Breast epithelium (tissue), 4 donors: ENCODE measurements at regions of chr11 and their contacts with region 1.

Region 1: DNA sequence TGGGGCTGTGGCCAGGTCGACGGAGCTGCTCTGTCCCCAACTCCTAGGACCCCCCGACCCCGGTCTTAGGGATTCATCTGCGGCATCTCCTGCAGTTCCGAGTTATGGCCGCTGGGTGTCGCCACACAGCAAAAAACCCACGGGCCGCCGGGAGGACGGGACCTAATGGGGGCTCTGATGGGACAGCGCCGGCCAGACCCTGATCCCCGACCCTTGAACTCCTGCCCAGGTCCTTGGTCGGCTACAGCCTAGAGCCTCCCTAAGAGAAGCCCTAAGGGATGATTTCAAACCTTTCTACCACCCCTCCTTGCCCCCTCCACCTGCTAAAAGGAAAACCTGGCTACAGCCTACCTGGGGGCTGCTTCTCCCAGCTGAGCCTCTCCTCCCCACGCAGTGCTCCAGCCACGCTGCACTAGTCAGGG is 30.8 kb upstream of the LRRC10B start:
- DNase-seq: no peak
- H3K4me3 ChIP-seq: no peak overlapping the region
- H3K27ac ChIP-seq: peak overlapping the region in 1 of 2 donors; percentile 25
- H3K4me1 ChIP-seq: peaks cover 0 to 7% of the 10 kb centered on the region in 2 donors
- H3K27me3 ChIP-seq: no peaks in the 10 kb centered on the region
- CTCF ChIP-seq: peak; percentile 86 to 96 (median 90)
- POLR2A ChIP-seq: no peak

Region 2: DNA sequence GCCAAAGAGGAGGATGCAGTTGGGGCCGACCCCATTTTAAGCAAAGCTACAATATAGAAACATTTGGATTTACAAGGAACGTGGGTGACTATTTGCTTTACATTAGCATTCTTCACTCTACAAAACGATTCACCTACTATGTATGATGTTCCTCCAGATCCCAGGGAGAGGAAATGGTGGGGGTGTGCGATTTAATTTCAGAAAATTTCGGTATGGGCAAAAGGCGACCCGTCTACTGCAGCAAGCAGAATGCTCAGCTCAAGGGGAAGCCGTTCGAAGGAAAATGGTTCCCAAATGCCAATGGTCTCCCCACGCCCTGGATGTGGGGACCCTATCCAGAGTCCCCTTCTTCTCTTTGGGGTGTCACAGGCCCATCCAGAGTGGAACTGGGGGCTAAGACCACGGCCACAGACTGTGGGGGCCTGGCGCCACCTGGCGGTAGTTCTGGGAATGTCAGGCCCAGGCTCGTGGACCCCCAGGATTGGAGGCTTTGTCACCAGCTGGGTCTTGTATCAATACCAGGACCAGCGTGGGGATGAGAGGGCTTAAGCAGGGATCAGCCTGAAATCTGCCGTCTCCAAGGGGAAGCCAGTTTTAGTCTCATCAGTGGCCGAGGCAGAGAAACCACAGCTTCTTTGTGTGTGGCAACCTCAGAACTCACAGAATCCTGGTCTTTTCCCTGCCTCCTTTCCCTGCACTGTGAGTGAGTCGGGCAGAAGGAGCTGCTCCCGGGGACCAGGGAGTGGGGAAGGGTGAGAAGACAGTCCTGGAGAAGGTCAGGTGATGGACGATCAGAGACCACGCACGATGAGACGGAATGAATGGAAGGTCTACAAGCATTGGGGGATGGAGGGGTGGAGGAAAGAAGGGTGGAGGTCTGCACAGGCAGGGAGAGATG is 39.2 kb after region 1 on chr11:
- intact Hi-C with region 1: loop called (anchors 5 kb)
- DNase-seq: no peak
- H3K4me3 ChIP-seq: no peak overlapping the region
- H3K27ac ChIP-seq: no peak overlapping the region
- H3K4me1 ChIP-seq: peaks cover 7 to 14% of the 10 kb centered on the region in 2 donors
- H3K27me3 ChIP-seq: no peaks in the 10 kb centered on the region
- CTCF ChIP-seq: peak; percentile 91 to 96 (median 94)
- POLR2A ChIP-seq: no peak

Region 3: GRCh38 chr11:61541598-61541997 is 63.9 kb after region 1 on chr11:
- intact Hi-C with region 1: no loop called
- DNase-seq: no peak
- H3K4me3 ChIP-seq: no peak overlapping the region
- H3K27ac ChIP-seq: peak overlapping the region in 1 of 2 donors; percentile 43
- H3K4me1 ChIP-seq: no peaks in the 10 kb centered on the region
- H3K27me3 ChIP-seq: no peaks in the 10 kb centered on the region
- CTCF ChIP-seq: no peak
- POLR2A ChIP-seq: no peak

Region 4: GRCh38 chr11:61695917-61696316 is 218.2 kb after region 1 on chr11:
- intact Hi-C with region 1: no loop called
- DNase-seq: peak; percentile 87 to 95
- H3K4me3 ChIP-seq: peak overlapping the region; percentile 25 to 62 (median 40)
- H3K27ac ChIP-seq: peak overlapping the region; percentile 99 to 100
- H3K4me1 ChIP-seq: peaks cover 22 to 85% of the 10 kb centered on the region in 2 donors
- H3K27me3 ChIP-seq: no peaks in the 10 kb centered on the region
- CTCF ChIP-seq: peak; percentile 23 to 25 (median 23)
- POLR2A ChIP-seq: no peak

Region 5: DNA sequence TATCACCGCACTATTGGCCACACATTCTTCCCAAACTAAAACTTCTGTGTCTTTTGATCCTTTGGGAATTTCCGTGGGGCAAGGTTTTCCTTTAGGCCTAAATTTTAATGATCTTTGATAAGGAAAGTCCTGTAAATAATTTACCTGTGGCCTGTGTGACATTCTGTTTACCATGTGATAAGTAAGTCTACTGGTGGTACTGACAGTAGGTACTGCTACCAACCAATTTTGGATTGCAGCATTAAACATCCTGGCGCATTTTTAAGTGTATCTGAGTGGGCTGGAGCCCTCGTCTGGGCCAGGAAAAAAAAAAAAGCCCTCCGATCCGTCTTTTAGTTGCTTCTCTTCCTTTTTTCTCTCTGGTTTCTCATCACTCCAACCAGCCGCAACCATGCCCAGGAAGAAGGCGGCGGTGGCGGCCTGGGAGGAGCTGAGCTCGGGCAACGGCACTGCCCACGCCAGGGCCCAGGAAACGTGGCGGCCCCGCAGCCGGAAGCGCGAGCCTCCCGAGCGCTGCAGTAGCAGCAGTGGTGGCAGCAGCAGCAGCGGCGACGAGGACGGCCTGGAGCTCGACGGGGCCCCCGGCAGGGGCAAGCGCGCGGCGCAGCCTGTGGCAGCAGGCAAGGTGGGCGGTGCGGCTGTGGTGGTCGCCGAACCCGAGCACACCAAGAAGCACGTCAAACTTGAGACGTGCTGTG is 893.2 kb after region 1 on chr11:
- intact Hi-C with region 1: no loop called
- DNase-seq: no peak
- H3K4me3 ChIP-seq: no peak overlapping the region
- H3K27ac ChIP-seq: peak overlapping the region in 1 of 2 donors; percentile 14
- H3K4me1 ChIP-seq: no peaks in the 10 kb centered on the region
- H3K27me3 ChIP-seq: no peaks in the 10 kb centered on the region
- CTCF ChIP-seq: no peak
- POLR2A ChIP-seq: no peak

Region 6: GRCh38 chr11:62831520-62832335 is 1354.0 kb after region 1 on chr11 and contains the start of gene STX5:
- intact Hi-C with region 1: no loop called
- DNase-seq: peak; percentile 100
- H3K4me3 ChIP-seq: peak within 1 kb of the TSS; percentile 74 to 92 (median 88)
- H3K27ac ChIP-seq: peak within 1 kb of the TSS; percentile 98
- H3K4me1 ChIP-seq: peaks cover 4 to 6% of the 10 kb centered on the region in 2 donors
- H3K27me3 ChIP-seq: no peaks in the 10 kb centered on the region
- CTCF ChIP-seq: no peak
- POLR2A ChIP-seq: peak; percentile 92
- total RNA-seq, gene STX5: 30.8 to 42.3 (median 34.2) TPM